Dendritic cell treated with granulocyte-macrophage colony-stimulating factor and Interleukin-4, amounts not matched to agents 40 ng/mL and 50 ng/mL, for 4 days (primary cell): ENCODE measurements at regions of chr2 and their contacts with region 1.

Region 1: GRCh38 chr2:68537809-68538208 is 70.4 kb downstream of the APLF start:
- H3K4me3 Mint-ChIP-seq: no peak overlapping the region
- H3K27ac Mint-ChIP-seq: peak overlapping the region; percentile 39
- H3K4me1 Mint-ChIP-seq: peaks cover 24% of the 10 kb centered on the region
- H3K27me3 Mint-ChIP-seq: no peaks in the 10 kb centered on the region

Region 2: GRCh38 chr2:68357605-68358337 is 180.0 kb before region 1 on chr2:
- intact Hi-C with region 1: no loop called
- H3K4me3 Mint-ChIP-seq: no peak overlapping the region
- H3K27ac Mint-ChIP-seq: no peak overlapping the region
- H3K4me1 Mint-ChIP-seq: peaks cover 14% of the 10 kb centered on the region
- H3K27me3 Mint-ChIP-seq: no peaks in the 10 kb centered on the region

Region 3: DNA sequence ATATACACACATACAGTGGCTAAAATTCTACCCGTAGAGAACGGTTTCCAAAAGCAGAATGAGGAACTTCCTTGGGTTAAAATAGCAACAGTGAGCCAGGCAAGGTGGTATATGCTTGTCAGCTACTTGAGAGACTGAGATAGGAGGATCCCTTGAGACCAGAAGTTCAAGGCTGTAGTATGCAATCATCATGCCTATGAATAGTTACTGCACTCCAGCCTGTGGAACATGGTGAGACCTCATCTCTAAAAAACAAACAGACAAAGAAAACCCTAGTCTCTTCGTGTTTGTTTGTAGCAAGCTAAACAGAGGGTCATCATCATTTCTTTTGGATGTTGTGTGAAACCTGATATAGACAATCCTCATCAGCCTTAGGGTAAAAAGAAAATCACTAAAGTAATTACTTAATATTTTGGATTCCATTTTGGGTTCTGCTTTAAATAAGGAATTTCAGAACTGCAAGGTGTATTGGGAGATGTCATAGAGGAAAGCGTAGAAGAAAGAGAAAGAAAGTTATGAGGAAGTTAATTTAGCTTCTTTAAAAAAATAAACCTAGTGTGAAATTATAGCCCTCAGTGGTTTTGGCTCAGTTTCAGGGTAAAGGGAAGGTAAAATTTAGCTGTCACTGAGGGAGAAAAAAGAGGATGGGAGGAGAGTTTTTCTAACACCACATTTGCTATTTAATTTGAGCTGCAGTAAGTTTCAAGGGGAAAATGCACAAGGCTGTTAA is 126.2 kb before region 1 on chr2:
- intact Hi-C with region 1: no loop called
- H3K4me3 Mint-ChIP-seq: no peak overlapping the region
- H3K27ac Mint-ChIP-seq: peak overlapping the region; percentile 15
- H3K4me1 Mint-ChIP-seq: peaks cover 29% of the 10 kb centered on the region
- H3K27me3 Mint-ChIP-seq: no peaks in the 10 kb centered on the region

Region 4: DNA sequence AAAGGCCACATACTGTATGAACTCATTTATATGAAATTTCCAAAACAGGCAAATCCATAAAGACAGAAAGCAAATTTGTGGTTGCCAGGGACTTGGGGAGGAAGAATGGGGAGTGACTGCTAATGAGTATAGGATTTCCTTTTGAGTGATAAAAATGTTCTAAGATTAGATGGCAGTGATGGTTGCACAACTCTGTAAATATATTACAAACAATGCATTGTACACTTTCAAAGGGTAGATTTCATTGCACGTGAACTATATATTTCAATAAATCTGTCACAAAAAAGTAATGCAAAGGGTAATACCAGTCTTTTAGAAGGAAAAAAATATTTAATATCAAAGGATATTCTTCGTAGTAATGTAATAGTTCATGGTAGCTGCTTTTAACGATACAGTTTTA is 41.9 kb after region 1 on chr2:
- intact Hi-C with region 1: loop called (anchors 5 kb)
- H3K4me3 Mint-ChIP-seq: no peak overlapping the region
- H3K27ac Mint-ChIP-seq: no peak overlapping the region
- H3K4me1 Mint-ChIP-seq: no peaks in the 10 kb centered on the region
- H3K27me3 Mint-ChIP-seq: no peaks in the 10 kb centered on the region